HEK293T (cell line): ENCODE measurements at regions of chr4 and their contacts with region 1.

Region 1: GRCh38 chr4:1693129-1693896 is 9.2 kb upstream of the FAM53A start:
- DNase-seq: peak; percentile 83

Region 2: DNA sequence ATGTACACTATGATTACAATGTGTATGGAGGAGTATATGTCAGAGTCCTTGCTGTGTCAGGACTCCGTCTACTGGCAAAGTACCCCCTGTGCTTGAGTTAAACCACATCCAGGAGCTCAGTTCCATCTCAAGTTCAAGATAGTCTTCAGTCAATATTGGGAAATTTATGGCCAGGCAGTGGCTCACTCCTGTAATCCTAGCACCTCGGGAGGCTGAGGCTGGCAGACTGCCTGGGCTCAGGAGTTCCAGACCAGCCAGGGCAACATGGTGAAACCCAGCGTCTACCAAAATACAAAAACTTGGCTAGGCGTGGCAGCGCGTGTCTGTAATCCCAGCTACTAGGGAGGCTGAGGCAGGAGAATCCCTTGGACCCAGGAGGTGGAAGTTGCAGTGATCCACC is 13.0 kb after region 1 on chr4:
- CTCF ChIA-PET with region 1: interaction called, 29 read pairs
- POLR2A ChIA-PET with region 1: interaction called, 17 read pairs
- DNase-seq: no peak

Region 3: DNA sequence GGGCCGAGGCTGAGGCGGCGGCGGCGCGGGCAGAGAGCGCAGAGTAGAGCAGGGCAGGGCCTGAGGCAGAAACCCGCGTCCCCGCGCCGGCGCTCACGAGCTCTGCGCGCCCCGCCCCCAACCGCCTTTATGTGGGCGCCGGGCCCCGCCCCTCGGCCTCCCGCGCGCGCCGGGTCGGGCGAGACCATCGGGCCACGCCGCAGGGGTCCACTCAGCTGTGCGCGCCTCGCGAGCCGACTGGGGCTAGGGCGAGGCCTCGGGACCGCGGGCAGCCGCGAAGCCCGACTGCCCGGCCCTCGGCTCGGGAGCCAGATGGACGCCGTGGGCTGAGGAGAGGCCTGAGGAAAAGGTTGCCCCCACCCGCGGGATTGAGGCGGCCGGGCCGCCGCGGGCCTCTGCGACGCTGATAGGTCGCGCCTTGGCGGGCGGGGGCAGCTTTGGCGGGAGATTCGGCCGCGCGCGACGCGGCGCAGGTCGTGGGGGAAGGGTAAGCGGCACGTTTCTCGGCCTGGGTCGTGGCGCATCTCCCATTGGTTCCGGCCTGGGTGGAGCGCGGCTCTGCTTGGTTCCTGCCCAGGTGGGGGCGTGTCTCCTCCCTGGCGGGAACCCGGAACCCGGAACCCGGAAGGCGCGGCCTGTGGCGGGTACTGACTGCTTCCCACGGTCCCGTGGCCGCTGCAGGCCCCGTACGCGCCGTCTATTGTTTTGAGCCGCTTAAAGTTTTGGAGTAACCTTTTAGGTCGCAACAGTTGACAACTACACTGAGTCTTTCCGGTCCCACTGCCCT is 19.1 kb after region 1 on chr4 and contains the start of gene SLBP:
- CTCF ChIA-PET with region 1: interaction called, 29 read pairs
- POLR2A ChIA-PET with region 1: interaction called, 17 read pairs
- DNase-seq: peak; percentile 94

Region 4: DNA sequence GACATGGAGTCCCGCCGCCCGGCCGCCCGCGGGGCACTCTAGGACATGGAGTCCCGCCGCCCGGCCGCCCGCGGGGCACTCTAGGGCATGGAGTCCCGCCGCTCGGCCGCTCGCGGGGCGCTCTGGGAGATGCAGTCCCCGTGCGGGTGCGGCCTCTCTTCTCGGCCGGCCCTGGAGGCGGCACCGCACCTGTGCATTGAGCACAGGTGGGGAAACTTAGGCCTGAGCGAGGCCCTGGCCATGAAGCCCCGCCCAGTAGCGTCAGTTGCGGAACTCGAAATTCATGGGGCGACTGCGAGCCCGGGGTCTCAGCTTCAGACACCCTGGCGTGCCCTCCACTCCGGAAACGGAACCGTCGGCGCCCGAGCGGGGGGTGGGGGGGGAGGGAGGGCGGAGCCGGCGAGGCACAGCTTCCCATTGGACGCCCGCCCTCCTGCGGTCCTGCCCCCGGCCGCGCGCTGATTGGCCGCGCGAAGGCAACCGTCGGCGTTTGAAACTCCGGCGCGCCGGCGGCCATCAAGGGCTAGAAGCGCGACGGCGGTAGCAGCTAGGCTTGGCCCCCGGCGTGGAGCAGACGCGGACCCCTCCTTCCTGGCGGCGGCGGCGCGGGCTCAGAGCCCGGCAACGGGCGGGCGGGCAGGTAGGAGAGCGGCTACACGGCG is 27.8 kb after region 1 on chr4 and contains the starts of genes TACC3 and TMEM129:
- CTCF ChIA-PET with region 1: interaction called, 110 read pairs
- POLR2A ChIA-PET with region 1: interaction called, 31 read pairs
- DNase-seq: peak; percentile 98

Region 5: DNA sequence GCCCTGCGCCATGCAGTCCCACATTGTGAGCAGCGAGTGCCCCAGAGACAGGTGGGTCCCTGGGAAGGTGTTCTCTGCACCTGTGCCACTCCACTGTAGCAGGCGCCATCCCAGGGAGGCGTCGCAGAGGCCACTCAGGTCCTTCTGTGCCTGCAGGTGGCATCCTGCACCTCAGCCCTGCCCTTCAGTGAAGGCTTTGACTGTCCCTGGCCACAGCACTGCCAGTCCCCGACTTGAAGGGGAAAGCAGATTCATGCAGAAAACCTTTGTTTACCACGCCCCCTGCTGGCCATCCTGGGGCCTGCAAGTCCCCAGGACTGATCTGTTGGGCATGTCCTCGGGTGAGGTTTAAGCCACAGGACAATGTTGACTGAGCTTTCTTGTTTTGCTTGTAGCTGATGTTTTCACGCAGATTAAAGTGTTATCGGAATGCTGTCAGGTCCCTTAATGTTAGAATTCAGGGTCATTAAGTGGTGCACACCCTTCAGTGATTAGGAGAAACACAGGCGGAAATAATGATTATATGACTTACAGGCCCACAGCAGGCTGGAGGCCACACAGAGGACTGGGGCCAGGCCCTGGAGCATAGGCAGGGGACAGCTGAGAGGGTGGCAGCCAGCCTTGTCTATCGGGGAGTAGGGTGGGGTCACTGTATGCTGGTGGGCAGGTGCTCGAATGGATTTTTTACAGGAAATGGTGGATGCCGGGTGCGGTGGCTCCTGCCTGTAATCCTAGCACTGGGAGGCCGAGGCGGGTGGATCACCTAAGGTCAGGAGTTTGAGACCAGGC is 33.0 kb after region 1 on chr4:
- CTCF ChIA-PET with region 1: interaction called, 110 read pairs
- POLR2A ChIA-PET with region 1: interaction called, 31 read pairs
- DNase-seq: peak; percentile 78